Activated naive CD4-positive, alpha-beta T cell treated with anti-CD3 and anti-CD28 coated beads for 36 hours (primary cell): ENCODE measurements at regions of chr9 and their contacts with region 1.

Region 1: DNA sequence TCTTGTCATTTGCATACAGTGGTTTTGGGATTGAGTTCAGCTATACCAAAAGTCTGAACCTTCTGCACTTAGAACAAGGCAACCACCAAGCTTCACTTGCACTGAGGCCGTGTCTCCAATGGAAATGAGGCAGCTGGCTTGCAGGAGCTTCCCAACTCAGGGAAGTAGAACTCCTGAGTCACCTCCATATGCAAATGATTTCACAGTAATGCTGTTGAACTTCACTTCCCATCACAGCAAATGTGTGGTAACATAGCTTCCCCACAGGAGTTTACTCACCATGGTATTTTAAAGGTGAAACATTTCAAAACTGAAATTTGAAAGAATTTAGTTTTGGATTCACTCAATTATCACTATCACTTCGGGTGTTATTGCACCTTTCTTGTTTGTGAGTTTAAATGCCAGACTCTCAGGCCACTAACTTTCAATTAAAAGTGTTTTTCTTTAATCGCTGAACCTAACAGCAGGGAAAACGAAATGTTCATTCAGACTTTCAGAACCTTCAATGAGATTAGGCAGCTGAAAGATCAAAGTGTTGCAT is 9.0 kb downstream of the CD274 start:
- DNase-seq: peak; percentile 61
- H3K4me3 Mint-ChIP-seq: peak overlapping the region; percentile 57
- H3K27ac Mint-ChIP-seq: peak overlapping the region; percentile 84
- H3K4me1 Mint-ChIP-seq: peaks cover 65% of the 10 kb centered on the region
- H3K27me3 Mint-ChIP-seq: no peaks in the 10 kb centered on the region

Region 2: DNA sequence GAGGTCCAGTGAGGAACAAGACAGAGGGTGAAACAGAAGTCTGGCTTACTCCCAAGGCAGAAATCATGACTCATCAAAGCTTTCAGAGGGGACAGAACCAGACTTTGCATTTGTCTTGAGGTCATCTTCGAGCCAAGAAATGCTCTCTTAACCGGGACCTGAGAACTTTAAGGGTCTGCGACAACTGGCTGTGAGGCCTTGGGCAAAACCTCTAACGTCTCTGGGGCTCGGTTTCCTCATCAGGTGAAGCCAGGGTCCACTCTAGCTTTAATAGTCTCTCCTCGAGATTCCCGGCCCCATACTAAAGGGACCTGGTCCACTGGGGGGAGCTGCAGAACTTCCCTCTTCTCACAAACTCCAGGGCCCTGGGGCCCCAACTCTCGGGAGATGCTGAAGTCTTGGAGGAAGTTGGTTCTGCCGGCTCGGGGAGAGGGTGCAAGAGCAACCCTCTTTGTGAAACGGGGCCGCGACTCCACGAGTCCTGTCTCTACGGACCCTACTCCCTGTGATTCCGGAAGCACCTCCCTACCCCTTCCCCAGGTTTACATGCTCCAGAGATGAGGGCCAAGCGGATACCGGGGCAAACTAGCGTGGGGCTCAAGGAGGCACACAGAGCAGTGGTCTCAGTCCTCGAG is 1162.1 kb before region 1 on chr9:
- CTCF ChIA-PET with region 1: no interaction called
- intact Hi-C with region 1: loop called (anchors 5 kb)
- DNase-seq: peak; percentile 80
- H3K4me3 Mint-ChIP-seq: peak overlapping the region; percentile 86
- H3K27ac Mint-ChIP-seq: peak overlapping the region; percentile 86
- H3K4me1 Mint-ChIP-seq: peaks cover 42% of the 10 kb centered on the region
- H3K27me3 Mint-ChIP-seq: peaks cover 7% of the 10 kb centered on the region

Region 3: DNA sequence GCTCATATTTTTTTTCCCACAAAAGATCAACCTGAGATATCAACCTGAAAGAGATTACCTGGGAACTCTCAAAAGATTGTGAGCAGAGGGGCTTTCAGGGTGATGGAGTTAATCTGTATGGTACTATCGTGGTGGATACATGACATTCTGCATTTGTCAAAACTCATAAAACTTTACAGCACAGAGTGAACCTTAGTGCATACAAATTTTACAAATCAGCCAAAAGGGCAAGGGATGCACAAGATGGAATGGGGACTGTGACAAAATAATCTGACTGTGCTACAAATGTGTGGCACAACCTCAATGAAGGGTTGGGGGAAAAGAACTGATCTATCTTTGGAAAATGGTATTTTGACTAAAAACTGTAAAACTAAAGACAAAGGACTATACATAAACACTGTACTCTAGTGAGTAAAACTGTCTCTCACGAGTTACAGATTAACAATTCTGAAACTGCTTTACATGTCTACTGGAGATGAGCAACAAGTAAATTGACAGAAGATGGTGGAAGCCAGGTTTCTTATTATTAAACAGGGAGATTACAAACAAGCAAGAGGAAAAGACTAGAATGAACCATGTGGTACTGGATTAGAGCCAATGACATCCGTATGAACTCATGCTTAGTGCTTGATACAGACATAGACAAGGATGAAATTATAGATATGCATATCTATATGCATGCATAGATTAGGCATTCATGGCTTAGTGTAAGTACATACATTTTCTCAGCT is 94.9 kb before region 1 on chr9:
- CTCF ChIA-PET with region 1: no interaction called
- intact Hi-C with region 1: loop called (anchors 1 kb)
- DNase-seq: peak; percentile 22
- H3K4me3 Mint-ChIP-seq: no peak overlapping the region
- H3K27ac Mint-ChIP-seq: peak overlapping the region; percentile 35
- H3K4me1 Mint-ChIP-seq: peaks cover 25% of the 10 kb centered on the region
- H3K27me3 Mint-ChIP-seq: no peaks in the 10 kb centered on the region

Region 4: DNA sequence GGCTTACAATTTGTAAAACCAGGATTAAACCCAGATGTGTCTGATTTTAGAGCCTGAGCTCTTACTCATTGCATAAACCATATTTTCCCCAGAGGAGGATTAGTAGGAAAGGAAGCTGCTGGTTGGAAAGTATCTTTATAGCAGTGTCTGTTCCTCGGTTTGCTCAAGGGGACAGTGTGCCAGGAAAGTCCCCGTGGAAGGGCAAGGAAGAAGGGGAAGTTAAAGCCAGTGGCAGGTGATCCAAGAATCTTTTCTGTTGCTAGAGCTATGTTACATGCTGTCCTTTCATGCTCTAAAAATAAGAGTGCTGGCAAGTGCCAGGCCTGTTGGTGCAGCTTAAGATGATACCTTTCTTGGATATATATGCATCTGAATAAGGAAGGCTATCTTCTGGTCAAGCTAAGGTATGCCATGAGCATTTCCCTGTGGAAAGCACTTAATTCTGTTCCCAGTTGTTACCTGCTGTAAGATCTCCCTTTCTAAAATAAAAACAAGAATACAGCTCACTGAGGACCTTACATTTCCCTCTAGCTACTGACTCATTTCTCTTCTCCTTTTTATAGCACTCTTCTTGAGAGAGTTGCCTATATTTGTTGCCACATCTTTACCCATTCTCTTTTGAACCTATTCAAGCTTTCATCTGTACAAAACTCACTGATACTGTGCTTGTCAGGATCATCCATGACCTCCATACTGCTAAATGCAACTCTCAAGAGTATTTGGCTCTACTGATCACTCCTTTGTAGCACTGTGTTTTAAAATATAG is 59.0 kb after region 1 on chr9:
- CTCF ChIA-PET with region 1: interaction called, 4 read pairs
- intact Hi-C with region 1: loop called (anchors 1 kb)
- DNase-seq: no peak
- H3K4me3 Mint-ChIP-seq: no peak overlapping the region
- H3K27ac Mint-ChIP-seq: peak overlapping the region; percentile 27
- H3K4me1 Mint-ChIP-seq: peaks cover 23% of the 10 kb centered on the region
- H3K27me3 Mint-ChIP-seq: no peaks in the 10 kb centered on the region

Region 5: GRCh38 chr9:5628530-5629311 is 169.4 kb after region 1 on chr9 and contains the start of gene RIC1:
- CTCF ChIA-PET with region 1: no interaction called
- intact Hi-C with region 1: loop called (anchors 1 kb)
- DNase-seq: peak; percentile 90
- H3K4me3 Mint-ChIP-seq: peak within 1 kb of the TSS; percentile 99
- H3K27ac Mint-ChIP-seq: peak within 1 kb of the TSS; percentile 100
- H3K4me1 Mint-ChIP-seq: peaks cover 59% of the 10 kb centered on the region
- H3K27me3 Mint-ChIP-seq: no peaks in the 10 kb centered on the region
- total RNA-seq, gene RIC1: 14.5 to 16.4 TPM

Region 6: GRCh38 chr9:5851445-5851844 is 392.1 kb after region 1 on chr9:
- CTCF ChIA-PET with region 1: no interaction called
- intact Hi-C with region 1: loop called (anchors 2 kb)
- DNase-seq: peak; percentile 73
- H3K4me3 Mint-ChIP-seq: no peak overlapping the region
- H3K27ac Mint-ChIP-seq: peak overlapping the region; percentile 26
- H3K4me1 Mint-ChIP-seq: peaks cover 41% of the 10 kb centered on the region
- H3K27me3 Mint-ChIP-seq: no peaks in the 10 kb centered on the region